ENCODE measurements at regions of chr1 and their contacts with region 1.

Region 1: GRCh38 chr1:31815752-31816500 is at the start of gene SPOCD1:
- DNase-seq: peak; percentile 79 to 86
- ATAC-seq: peak; percentile 83 to 90
- H3K4me3 ChIP-seq: no peak within 1 kb of the TSS; the same call in 2 of the 3 replicates
- H3K27ac ChIP-seq: peak within 1 kb of the TSS; percentile 48 to 80
- H3K4me1 ChIP-seq: no peaks in the 10 kb centered on the region
- CTCF ChIP-seq: peak; percentile 86
- EP300 ChIP-seq: no peak
- POLR2A ChIP-seq: no peak
- RAD21 ChIP-seq: peak; percentile 79
- polyA plus RNA-seq, gene SPOCD1: 0.98 and 1.2 TPM in 2 replicates

Region 2: GRCh38 chr1:31795801-31796621 is 19.9 kb before region 1 on chr1:
- CTCF ChIA-PET with region 1: interaction called, 11 read pairs
- POLR2A ChIA-PET with region 1: no interaction called
- DNase-seq: peak in 1 of 2 experiments; percentile 17
- ATAC-seq: no peak
- H3K4me3 ChIP-seq: no peak overlapping the region
- H3K27ac ChIP-seq: no peak overlapping the region
- H3K4me1 ChIP-seq: peaks cover 28% of the 10 kb centered on the region
- CTCF ChIP-seq: no peak
- EP300 ChIP-seq: no peak
- POLR2A ChIP-seq: no peak
- RAD21 ChIP-seq: no peak